ENCODE measurements at regions of chr11 and their contacts with region 1.

Region 1: DNA sequence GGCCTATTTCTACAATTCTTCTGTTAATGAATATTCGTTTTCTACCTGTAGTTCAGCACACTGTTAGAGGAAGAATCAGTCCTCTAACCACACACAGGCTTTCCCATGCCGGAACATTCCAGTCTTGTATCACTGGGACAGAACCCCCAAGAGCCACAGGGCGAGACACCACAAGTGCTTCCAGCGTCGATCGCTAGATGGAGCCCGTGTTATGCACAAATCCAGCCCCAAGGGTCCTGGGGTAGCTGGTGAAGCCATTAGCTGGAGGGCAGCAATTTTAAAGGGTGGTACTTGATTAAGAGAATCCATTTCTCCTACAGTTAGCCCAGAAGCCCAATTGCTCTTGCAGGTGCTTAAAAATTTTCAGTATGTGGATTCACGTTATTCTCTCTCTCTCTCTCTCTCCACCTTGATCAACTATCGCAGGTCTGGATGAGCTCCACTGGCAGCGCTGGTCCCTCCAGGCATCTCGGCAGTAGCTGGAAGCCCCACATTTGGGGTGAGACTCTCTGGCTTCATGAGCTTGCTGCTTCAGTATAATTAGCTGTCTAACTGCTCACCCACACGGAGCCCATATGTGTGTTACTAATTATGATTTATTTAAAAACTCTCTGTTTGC is 148.2 kb upstream of the SNX19 start:
- DNase-seq: peak; percentile 91
- ATAC-seq: peak; percentile 96
- H3K4me3 Mint-ChIP-seq: no peak overlapping the region
- H3K27ac Mint-ChIP-seq: no peak overlapping the region
- H3K4me1 Mint-ChIP-seq: peaks cover 43% of the 10 kb centered on the region
- H3K27me3 Mint-ChIP-seq: 0 out of 2 replicates have a peak, but pooled peaks cover 3% of the 10 kb centered on the region
- CTCF ChIP-seq: peak; percentile 63

Region 2: DNA sequence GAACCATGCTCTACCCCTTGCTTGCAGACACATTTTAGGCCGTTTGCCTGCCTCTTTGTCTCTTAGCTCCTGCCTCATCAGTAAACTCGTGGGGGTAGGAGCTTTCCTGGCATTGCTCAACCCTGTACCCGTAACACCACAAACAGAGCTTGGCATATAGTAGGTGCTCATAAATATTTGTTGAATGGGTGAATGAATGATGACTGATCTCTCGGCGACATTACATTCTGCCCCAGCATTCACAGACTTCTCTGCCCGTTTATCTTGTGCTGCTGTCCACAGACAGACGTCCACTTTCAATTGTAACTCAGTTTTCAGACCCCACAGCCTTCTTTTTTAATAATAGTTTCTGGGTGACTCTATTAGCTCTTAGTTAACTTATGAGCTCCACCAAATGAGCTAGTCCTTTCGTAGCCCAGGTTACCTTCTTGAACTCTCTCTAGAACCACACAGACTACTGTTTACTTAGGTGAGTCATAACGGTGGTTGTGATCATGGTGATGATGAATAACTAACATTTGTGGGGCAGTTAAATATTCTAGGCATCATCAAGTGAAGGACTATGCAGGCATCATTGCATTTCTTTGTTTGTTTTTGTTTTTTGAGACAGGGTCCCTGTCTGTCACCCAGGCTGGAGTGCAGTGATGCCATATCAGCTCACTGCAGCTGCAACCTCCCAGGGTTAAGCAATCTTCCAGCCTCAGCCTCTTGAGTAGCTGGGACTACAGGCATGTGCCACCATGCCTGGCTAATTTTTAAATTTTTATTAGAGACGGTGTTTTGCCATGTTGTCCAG is 427.6 kb before region 1 on chr11:
- CTCF ChIA-PET with region 1: no interaction called
- POLR2A ChIA-PET with region 1: no interaction called
- DNase-seq: no peak
- ATAC-seq: no peak
- H3K4me3 Mint-ChIP-seq: no peak overlapping the region
- H3K27ac Mint-ChIP-seq: no peak overlapping the region
- H3K4me1 Mint-ChIP-seq: peaks cover 10% of the 10 kb centered on the region
- H3K27me3 Mint-ChIP-seq: no peaks in the 10 kb centered on the region; the same call in 1 of the 2 replicates
- CTCF ChIP-seq: no peak

Region 3: GRCh38 chr11:131038597-131038996 is 25.9 kb before region 1 on chr11:
- CTCF ChIA-PET with region 1: interaction called, 16 read pairs
- POLR2A ChIA-PET with region 1: no interaction called
- DNase-seq: no peak
- ATAC-seq: peak; percentile 89
- H3K4me3 Mint-ChIP-seq: no peak overlapping the region
- H3K27ac Mint-ChIP-seq: no peak overlapping the region
- H3K4me1 Mint-ChIP-seq: peaks cover 24% of the 10 kb centered on the region
- H3K27me3 Mint-ChIP-seq: no peaks in the 10 kb centered on the region
- CTCF ChIP-seq: no peak

Region 4: GRCh38 chr11:131217313-131218310 is 153.1 kb after region 1 on chr11:
- CTCF ChIA-PET with region 1: interaction called, 31 read pairs
- POLR2A ChIA-PET with region 1: no interaction called
- DNase-seq: no peak
- ATAC-seq: peak; percentile 60
- H3K4me3 Mint-ChIP-seq: no peak overlapping the region
- H3K27ac Mint-ChIP-seq: peak overlapping the region; percentile 29; the same call in 1 of the 2 replicates
- H3K4me1 Mint-ChIP-seq: peaks cover 72% of the 10 kb centered on the region
- H3K27me3 Mint-ChIP-seq: peaks cover 3% of the 10 kb centered on the region; the same call in 1 of the 2 replicates
- CTCF ChIP-seq: no peak

Region 5: DNA sequence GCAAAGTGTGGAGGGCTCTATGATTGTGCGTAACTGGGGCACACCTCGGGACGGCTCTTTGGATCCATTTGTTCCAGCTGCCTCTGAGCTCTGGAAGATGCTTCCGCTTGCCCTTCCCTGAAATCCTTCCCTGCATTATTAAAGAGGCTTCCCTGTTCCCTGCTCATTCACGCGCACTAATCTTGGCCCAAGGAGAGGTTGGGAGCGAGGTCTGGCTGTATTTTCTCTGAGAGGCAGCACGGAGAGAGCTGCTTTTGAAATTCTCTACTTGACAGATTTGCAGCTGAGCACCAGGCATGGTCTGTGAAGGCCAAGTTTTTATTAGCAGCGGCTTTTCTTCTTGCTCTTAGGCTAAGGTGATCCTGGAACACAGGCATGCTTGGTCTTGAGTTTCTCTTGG is 211.1 kb after region 1 on chr11:
- CTCF ChIA-PET with region 1: interaction called, 11 read pairs
- POLR2A ChIA-PET with region 1: no interaction called
- DNase-seq: no peak
- ATAC-seq: peak; percentile 48
- H3K4me3 Mint-ChIP-seq: no peak overlapping the region
- H3K27ac Mint-ChIP-seq: peak overlapping the region; percentile 77
- H3K4me1 Mint-ChIP-seq: peaks cover 60% of the 10 kb centered on the region
- H3K27me3 Mint-ChIP-seq: no peaks in the 10 kb centered on the region
- CTCF ChIP-seq: no peak

Region 6: GRCh38 chr11:131327421-131327820 is 262.9 kb after region 1 on chr11:
- CTCF ChIA-PET with region 1: interaction called, 10 read pairs
- POLR2A ChIA-PET with region 1: no interaction called
- DNase-seq: no peak
- ATAC-seq: no peak
- H3K4me3 Mint-ChIP-seq: no peak overlapping the region
- H3K27ac Mint-ChIP-seq: no peak overlapping the region
- H3K4me1 Mint-ChIP-seq: peaks cover 15% of the 10 kb centered on the region
- H3K27me3 Mint-ChIP-seq: no peaks in the 10 kb centered on the region
- CTCF ChIP-seq: no peak

Region 7: DNA sequence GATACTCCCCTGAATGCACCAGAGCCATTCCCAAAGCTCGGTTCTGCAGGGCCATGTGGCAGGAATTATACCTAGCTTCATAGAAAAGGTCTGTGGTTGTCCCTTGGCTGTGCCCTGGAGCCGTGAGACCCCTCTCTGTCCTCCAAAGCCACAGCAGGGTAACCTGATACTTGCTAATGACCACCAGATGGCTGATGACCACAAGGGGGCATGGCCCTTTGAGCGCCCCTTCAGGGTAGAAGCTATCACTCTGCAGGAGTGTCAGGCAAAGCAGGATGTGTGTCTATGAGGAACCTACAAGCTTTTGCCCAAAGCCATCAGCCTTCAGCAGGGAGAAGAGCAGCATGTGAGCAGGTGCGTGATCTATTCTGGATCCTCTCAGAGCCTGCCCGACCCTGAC is 401.3 kb after region 1 on chr11:
- CTCF ChIA-PET with region 1: interaction called, 36 read pairs
- POLR2A ChIA-PET with region 1: no interaction called
- DNase-seq: peak; percentile 78
- ATAC-seq: peak; percentile 97
- H3K4me3 Mint-ChIP-seq: no peak overlapping the region
- H3K27ac Mint-ChIP-seq: peak overlapping the region; percentile 87
- H3K4me1 Mint-ChIP-seq: peaks cover 42% of the 10 kb centered on the region
- H3K27me3 Mint-ChIP-seq: no peaks in the 10 kb centered on the region
- CTCF ChIP-seq: 0 out of 2 replicates have a peak, but pooled peaks have one; percentile 25

Region 8: DNA sequence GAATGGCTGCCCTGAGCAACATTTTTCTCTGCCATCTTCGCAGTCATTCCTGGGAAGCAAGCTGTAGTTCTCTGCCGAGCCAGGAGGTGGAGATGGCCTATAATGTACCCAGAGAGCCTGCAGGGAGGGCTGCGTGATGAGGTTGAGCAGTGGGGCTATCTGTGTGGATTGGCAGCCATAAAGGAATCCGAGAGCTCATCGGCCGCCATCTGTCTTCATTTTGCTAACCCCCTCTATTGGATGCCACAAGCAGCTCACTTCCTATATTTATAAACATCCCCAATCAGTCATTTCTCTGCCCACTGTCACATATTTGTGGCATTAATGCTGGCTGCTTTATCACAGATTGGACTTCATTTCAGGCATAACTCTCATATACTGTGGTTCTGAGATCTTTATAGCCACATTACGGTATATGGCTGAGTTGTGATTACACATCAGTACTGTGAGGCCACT is 515.5 kb after region 1 on chr11:
- CTCF ChIA-PET with region 1: interaction called, 18 read pairs
- POLR2A ChIA-PET with region 1: interaction called, 3 read pairs
- DNase-seq: peak; percentile 70
- ATAC-seq: peak; percentile 97
- H3K4me3 Mint-ChIP-seq: no peak overlapping the region
- H3K27ac Mint-ChIP-seq: no peak overlapping the region
- H3K4me1 Mint-ChIP-seq: peaks cover 40% of the 10 kb centered on the region
- H3K27me3 Mint-ChIP-seq: no peaks in the 10 kb centered on the region
- CTCF ChIP-seq: peak; percentile 68